ENCODE measurements at regions of chrX and their contacts with region 1.

Region 1: GRCh38 chrX:136055651-136056221 is 70.5 kb downstream of the SLC9A6 start:
- DNase-seq: no peak
- ATAC-seq: peak; percentile 89
- H3K4me3 ChIP-seq: no peak overlapping the region
- H3K27ac ChIP-seq: peak overlapping the region; percentile 61 to 90
- H3K4me1 ChIP-seq: no peaks in the 10 kb centered on the region
- H3K27me3 ChIP-seq: no peaks in the 10 kb centered on the region

Region 2: DNA sequence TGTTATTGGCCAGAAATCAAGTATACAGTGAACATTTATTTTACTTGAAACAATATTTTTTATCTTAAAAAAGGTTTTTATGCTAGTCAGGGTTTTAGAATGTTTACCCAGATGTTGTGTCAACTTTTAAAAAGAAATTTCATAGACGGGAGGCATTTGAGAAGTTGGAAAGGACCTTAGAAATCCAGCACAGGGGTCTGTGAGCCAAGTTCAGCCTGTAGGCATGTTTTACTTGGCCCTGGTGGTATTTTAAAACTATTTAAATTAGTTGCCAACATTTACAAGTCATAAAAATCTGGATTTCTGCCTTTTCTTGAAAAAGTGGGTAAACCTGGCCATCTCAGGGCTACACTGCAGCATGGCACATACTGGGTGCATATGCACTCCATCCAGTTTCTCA is 66.1 kb after region 1 on chrX:
- intact Hi-C with region 1: loop called in 1 of 2 experiments (anchors 5 kb)
- DNase-seq: no peak
- ATAC-seq: peak; percentile 63
- H3K4me3 ChIP-seq: no peak overlapping the region
- H3K27ac ChIP-seq: peak overlapping the region in 1 of 2 donors; percentile 32
- H3K4me1 ChIP-seq: no peaks in the 10 kb centered on the region
- H3K27me3 ChIP-seq: no peaks in the 10 kb centered on the region

Region 3: DNA sequence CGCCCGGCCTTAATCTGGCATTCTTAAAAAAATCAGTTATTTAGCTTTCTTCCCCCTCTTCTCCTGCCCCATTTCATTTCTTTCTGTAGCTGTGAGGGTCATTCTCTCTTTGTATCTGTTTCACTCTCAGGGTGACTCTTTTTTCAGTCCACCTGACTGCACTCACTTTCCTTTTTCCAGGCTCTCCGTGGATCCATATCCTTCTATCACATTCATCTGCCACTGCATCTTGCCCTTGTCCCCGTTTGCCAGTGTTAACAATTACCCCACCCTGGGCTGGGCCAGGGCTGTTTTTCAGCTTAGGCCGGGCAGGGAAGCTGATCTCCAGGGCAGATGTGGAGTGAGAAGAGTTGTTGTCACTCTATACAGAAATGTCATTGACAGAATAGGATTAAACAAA is 99.3 kb after region 1 on chrX:
- intact Hi-C with region 1: loop called in 1 of 2 experiments (anchors 5 kb)
- DNase-seq: no peak
- ATAC-seq: no peak
- H3K4me3 ChIP-seq: peak overlapping the region in 1 of 2 donors; percentile 41
- H3K27ac ChIP-seq: peak overlapping the region in 1 of 2 donors; percentile 50
- H3K4me1 ChIP-seq: peaks cover 3 to 4% of the 10 kb centered on the region in 2 donors
- H3K27me3 ChIP-seq: no peaks in the 10 kb centered on the region

Region 4: GRCh38 chrX:136268051-136269048 is 212.6 kb after region 1 on chrX:
- intact Hi-C with region 1: no loop called
- DNase-seq: no peak
- ATAC-seq: peak; percentile 68
- H3K4me3 ChIP-seq: no peak overlapping the region
- H3K27ac ChIP-seq: no peak overlapping the region
- H3K4me1 ChIP-seq: no peaks in the 10 kb centered on the region
- H3K27me3 ChIP-seq: no peaks in the 10 kb centered on the region

Measured in aorta (tissue), 5 donors.